ENCODE measurements at regions of chr20 and their contacts with region 1.

Region 1: GRCh38 chr20:48897246-48897994 is 24.1 kb upstream of the ARFGEF2 start:
- DNase-seq: peak; percentile 96
- ATAC-seq: peak; percentile 97
- H3K4me3 ChIP-seq: peak overlapping the region; percentile 8; the same call in 1 of the 2 replicates
- H3K27ac ChIP-seq: peak overlapping the region; percentile 78
- H3K4me1 ChIP-seq: peaks cover 18% of the 10 kb centered on the region
- H3K27me3 ChIP-seq: no peaks in the 10 kb centered on the region
- CTCF ChIP-seq: no peak

Region 2: DNA sequence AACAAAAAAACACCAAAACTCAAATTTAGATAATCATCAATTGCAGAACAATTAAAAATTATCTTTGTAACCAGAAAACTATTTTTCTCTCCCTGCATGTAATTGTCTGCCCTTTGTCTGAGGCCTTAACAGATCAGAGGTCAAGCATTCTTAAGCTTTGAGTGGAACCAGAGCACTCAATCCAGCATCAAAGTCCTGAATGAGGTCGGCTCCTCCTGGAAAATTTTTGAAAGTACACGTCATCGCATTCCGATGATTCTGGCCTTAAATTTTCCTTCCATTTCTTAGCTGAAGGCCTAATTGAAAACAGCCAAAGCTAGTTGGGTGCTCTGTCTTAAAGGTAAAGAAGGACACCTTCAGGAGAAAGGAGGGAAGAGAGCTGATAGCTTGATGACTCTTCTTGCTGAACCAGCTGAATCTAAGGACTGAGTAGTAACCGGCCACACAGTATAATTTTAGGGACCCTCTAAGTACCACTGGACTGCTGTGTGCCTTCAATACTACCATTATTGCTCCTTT is 601.9 kb before region 1 on chr20:
- CTCF ChIA-PET with region 1: no interaction called
- POLR2A ChIA-PET with region 1: no interaction called
- intact Hi-C with region 1: no loop called
- DNase-seq: peak; percentile 98
- ATAC-seq: peak; percentile 85
- H3K4me3 ChIP-seq: no peak overlapping the region
- H3K27ac ChIP-seq: peak overlapping the region; percentile 36
- H3K4me1 ChIP-seq: peaks cover 50% of the 10 kb centered on the region
- H3K27me3 ChIP-seq: no peaks in the 10 kb centered on the region
- CTCF ChIP-seq: peak; percentile 83

Region 3: GRCh38 chr20:48657475-48658470 is 239.6 kb before region 1 on chr20:
- CTCF ChIA-PET with region 1: interaction called, 27 read pairs
- POLR2A ChIA-PET with region 1: no interaction called
- intact Hi-C with region 1: no loop called
- DNase-seq: peak; percentile 93
- ATAC-seq: peak; percentile 78
- H3K4me3 ChIP-seq: no peak overlapping the region
- H3K27ac ChIP-seq: no peak overlapping the region
- H3K4me1 ChIP-seq: no peaks in the 10 kb centered on the region
- H3K27me3 ChIP-seq: no peaks in the 10 kb centered on the region
- CTCF ChIP-seq: peak; percentile 99

Region 4: DNA sequence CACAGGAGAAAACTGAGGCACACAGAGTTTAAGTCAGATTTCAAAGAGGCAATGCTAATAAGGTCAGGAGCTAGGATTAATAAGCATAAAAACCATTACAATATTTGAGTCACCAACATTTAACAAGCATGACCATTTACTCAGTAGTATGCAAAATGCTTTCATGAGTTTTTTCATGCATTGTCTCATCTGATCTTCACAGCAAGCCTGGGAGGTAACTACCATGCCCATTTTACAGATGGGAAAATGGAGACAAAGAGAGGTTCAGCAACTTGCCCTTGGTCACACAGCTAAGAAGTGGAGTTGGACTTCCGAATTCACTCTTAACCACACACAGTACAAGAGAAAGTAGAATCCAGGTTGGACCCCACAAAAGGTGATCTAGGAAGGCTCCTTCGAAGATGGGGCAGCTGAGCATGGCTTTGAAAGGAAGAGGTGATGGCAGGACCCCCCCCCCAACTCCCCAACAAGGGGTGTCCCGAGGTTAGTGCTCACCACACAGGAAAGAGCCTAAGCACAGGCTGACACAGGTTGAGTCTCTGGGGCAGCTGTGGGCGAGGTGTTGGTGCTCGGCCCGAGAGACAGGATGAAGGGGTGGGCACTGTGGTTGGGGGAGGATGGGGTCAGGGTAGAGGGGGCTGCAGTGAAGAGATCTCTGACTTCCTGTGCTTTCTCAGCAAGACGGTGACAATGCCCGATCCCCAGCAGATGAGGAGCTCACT is 178.4 kb before region 1 on chr20:
- CTCF ChIA-PET with region 1: no interaction called
- POLR2A ChIA-PET with region 1: interaction called, 11 read pairs
- intact Hi-C with region 1: no loop called
- DNase-seq: peak; percentile 29
- ATAC-seq: peak; percentile 58
- H3K4me3 ChIP-seq: no peak overlapping the region
- H3K27ac ChIP-seq: no peak overlapping the region
- H3K4me1 ChIP-seq: peaks cover 7% of the 10 kb centered on the region; the same call in 1 of the 2 replicates
- H3K27me3 ChIP-seq: no peaks in the 10 kb centered on the region
- CTCF ChIP-seq: no peak

Region 5: DNA sequence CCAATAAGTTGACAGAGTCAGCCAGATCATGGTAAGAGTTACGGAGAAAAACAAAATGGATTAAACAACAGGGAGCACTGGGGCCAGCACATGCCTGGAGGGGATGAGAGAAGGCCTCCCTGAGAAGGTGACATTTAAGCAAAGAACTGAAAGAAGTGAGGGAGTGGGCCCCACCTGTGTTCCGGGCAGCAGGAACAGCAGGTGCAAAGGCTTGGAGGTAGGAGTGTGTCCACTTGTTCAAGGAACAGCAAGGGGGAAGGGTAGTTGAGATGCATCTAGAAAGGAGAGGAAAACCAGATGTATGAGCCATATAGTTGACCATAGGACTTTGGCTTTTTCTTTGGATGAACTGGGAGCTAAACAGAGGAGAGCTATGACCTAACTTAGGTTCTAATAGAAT is 62.0 kb before region 1 on chr20:
- CTCF ChIA-PET with region 1: no interaction called
- POLR2A ChIA-PET with region 1: interaction called, 5 read pairs
- intact Hi-C with region 1: loop called (anchors 2 kb)
- DNase-seq: no peak
- ATAC-seq: no peak
- H3K4me3 ChIP-seq: no peak overlapping the region
- H3K27ac ChIP-seq: no peak overlapping the region
- H3K4me1 ChIP-seq: peaks cover 29% of the 10 kb centered on the region
- H3K27me3 ChIP-seq: no peaks in the 10 kb centered on the region
- CTCF ChIP-seq: no peak

Region 6: GRCh38 chr20:48957533-48957932 is 60.1 kb after region 1 on chr20:
- CTCF ChIA-PET with region 1: no interaction called
- POLR2A ChIA-PET with region 1: interaction called, 14 read pairs
- intact Hi-C with region 1: no loop called
- DNase-seq: no peak
- ATAC-seq: 0 out of 2 replicates have a peak, but pooled peaks have one; percentile 17
- H3K4me3 ChIP-seq: no peak overlapping the region
- H3K27ac ChIP-seq: no peak overlapping the region
- H3K4me1 ChIP-seq: peaks cover 7% of the 10 kb centered on the region
- H3K27me3 ChIP-seq: no peaks in the 10 kb centered on the region
- CTCF ChIP-seq: no peak